Right ventricle myocardium inferior (tissue), 1 donor: ENCODE measurements at regions of chr11 and their contacts with region 1.

Region 1: DNA sequence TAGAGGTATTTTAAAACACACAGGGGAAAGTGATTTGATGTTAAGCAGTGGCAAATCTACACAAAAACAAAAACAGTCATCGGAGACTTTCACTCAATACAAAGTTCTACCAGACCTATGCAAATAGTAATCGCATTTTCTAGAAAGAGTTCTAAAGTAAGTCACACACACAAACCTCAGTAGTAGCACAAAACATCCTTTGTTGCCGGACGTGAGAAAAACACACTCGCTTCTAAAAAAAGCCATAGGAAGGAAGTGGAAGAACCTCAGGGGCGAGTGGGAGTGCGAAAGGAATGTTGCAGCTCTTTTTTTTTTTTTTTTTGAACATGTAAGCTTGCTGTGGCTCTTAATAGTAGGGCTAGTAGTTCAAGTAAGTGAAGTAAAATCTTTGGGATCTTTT is 88.9 kb downstream of the MAML2 start:
- DNase-seq: no peak
- ATAC-seq: no peak

Region 2: DNA sequence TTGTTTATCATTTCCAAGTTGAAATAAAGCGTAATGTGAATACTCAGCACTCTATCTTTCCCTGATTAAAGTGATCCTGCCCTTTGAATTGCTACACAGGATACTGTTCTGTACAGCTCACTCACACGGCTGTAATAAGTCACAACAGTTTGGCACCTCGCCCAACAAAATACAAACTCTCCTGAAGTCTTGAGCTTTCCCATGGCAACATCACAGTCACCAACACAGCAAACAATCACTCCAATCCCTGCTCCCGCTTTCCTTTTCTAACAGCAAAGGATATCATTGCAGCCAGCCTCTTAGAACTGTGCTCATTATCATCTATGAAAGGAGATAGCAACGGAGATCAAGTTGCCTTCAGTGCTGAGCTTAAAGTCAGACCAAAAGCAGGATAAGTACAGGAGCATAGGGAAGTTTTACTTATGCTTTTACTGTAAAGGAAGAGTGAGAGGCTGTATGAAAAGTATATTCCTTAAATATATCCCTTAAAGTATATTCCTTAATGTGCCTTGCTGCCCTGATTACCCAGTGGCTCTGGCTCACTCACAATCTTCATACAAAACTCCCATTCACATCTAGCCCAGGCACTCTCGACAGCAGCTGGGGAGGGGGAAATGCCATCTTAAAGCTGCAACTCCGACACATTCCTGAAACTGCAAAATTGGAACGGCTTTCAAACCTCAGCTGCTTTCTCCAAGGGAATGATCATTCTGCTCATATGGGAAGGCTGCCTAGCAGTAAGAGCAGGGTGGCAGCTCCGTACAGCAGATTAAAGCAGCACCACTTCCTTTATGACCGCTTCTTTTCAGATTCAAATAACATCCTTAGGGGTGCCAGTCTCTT is 53.1 kb after region 1 on chr11:
- intact Hi-C with region 1: loop called (anchors 5 kb)
- DNase-seq: peak; percentile 66
- ATAC-seq: peak; percentile 96